ENCODE measurements at regions of chr3 and their contacts with region 1.

Region 1: DNA sequence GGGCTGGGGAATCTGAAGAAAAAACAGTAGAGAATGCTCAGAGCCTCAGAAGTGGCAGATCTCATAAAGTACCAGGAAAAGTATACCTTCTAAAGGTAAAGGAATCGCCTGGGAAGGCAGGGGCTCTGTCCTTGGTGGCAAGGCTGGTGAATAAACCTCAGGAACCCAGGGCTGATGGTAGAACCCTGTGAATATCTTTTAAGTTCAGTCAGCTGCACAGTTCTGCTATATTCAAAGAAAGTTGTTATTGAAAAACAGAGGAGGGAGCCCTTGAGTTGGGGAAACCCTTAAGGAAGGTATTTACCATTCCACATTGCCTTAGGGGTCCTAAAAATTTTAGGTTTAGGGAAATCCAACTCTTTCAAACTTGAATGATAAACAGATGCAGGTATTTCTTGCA is 31.2 kb downstream of the ZPLD1 start:
- DNase-seq: peak; percentile 63
- H3K4me3 ChIP-seq: no peak overlapping the region
- H3K27ac ChIP-seq: no peak overlapping the region
- H3K4me1 ChIP-seq: no peaks in the 10 kb centered on the region
- H3K27me3 ChIP-seq: no peaks in the 10 kb centered on the region
- CTCF ChIP-seq: peak; percentile 57

Region 2: DNA sequence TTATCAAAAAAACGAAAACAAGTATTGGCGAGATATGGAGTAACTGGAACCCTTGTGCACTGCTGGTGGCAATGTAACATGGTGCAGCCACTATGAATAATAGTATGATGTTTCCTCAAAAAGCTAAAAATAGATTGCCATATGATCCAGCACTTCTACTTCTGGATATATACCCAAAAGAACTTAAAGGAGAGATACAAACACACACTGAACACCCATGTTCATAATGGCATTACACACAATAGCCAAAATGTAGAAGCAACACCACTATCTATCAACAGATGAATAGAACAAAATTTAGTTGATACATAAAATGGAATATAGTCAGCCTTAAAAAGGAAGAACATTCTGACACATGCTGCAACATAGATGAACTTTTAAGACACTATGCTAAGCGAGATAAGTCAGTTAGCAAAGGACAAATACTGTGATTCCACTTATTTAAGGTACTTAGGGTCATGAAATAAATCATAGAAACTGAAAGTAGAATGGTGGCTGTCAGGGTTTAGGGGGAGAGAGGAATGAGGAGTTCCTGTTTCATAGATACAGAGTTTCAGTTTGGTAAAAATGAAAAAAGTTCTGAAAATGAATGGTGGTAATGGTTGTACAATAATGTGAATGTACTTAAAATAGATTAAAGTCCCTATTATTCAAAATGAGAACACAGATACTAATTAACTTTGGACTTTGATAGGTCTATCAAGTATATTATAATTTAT is 1086.2 kb before region 1 on chr3:
- CTCF ChIA-PET with region 1: no interaction called
- POLR2A ChIA-PET with region 1: no interaction called
- intact Hi-C with region 1: no loop called
- DNase-seq: no peak
- H3K4me3 ChIP-seq: no peak overlapping the region
- H3K27ac ChIP-seq: no peak overlapping the region
- H3K4me1 ChIP-seq: no peaks in the 10 kb centered on the region
- H3K27me3 ChIP-seq: no peaks in the 10 kb centered on the region
- CTCF ChIP-seq: no peak

Region 3: DNA sequence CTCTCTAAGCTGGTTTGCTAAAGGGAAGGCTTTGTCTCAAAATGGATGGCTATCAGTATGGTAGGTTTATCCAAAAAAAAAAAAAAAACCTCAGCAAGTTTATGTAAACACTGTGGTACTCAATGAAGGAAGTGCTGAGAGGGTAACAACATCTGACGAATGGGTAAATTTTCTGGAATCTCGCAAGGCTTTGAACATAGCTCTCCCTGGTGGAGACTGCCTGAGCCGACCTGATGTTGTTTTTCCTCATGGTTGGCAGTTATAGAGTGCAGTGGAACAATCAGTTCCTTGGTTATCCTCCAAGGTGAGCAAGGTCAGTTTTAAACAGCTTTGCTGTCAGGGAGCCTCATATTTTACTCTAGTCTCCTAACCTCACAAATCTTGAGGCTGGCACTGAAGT is 63.5 kb after region 1 on chr3:
- CTCF ChIA-PET with region 1: interaction called, 3 read pairs
- POLR2A ChIA-PET with region 1: no interaction called
- intact Hi-C with region 1: loop called (anchors 2 kb)
- DNase-seq: peak; percentile 66
- H3K4me3 ChIP-seq: no peak overlapping the region
- H3K27ac ChIP-seq: no peak overlapping the region
- H3K4me1 ChIP-seq: peaks cover 3% of the 10 kb centered on the region
- H3K27me3 ChIP-seq: no peaks in the 10 kb centered on the region
- CTCF ChIP-seq: peak; percentile 78

Measured in A673 (cell line).